Transverse colon (tissue), 4 donors: ENCODE measurements at regions of chr14 and their contacts with region 1.

Region 1: GRCh38 chr14:105760691-105761346 is 234.4 kb downstream of the TMEM121 start:
- DNase-seq: no peak
- H3K4me3 ChIP-seq: no peak overlapping the region
- H3K27ac ChIP-seq: no peak overlapping the region
- H3K4me1 ChIP-seq: no peaks in the 10 kb centered on the region
- H3K27me3 ChIP-seq: no peaks in the 10 kb centered on the region
- CTCF ChIP-seq: no peak
- EP300 ChIP-seq: no peak
- POLR2A ChIP-seq: no peak

Region 2: DNA sequence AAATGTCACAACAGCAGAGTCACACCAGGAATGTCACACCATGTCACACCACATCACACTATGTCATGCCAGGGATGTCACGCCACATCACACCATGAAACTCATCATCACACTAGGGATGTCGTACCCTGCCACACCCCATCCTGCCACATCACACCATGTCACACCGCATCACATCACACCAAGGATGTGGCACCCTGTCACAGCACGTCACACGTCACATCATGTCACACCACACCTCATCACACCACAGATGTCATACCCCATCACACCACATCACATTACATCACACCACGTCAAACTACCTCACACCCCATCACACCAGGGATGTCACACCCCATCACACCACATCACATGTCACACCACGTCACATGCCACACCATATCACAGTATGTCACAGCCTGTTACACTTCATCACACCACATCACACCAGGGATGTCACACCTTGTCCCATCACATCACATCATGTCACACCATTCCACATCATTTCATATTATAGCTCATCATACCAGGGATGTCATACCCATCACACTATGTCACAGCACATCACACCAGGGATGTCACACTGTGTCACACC is 143.5 kb before region 1 on chr14:
- in situ Hi-C with region 1: loop called in 2 of 4 experiments (anchors 5 to 10 kb)
- intact Hi-C with region 1: loop called (anchors 5 kb)
- DNase-seq: no peak
- H3K4me3 ChIP-seq: no peak overlapping the region
- H3K27ac ChIP-seq: no peak overlapping the region
- H3K4me1 ChIP-seq: no peaks in the 10 kb centered on the region
- H3K27me3 ChIP-seq: no peaks in the 10 kb centered on the region
- CTCF ChIP-seq: no peak
- EP300 ChIP-seq: no peak
- POLR2A ChIP-seq: no peak

Region 3: GRCh38 chr14:105806566-105806965 is 45.7 kb after region 1 on chr14:
- in situ Hi-C with region 1: no loop called
- intact Hi-C with region 1: no loop called
- DNase-seq: no peak
- H3K4me3 ChIP-seq: no peak overlapping the region
- H3K27ac ChIP-seq: no peak overlapping the region
- H3K4me1 ChIP-seq: no peaks in the 10 kb centered on the region
- H3K27me3 ChIP-seq: no peaks in the 10 kb centered on the region
- CTCF ChIP-seq: no peak
- EP300 ChIP-seq: no peak
- POLR2A ChIP-seq: no peak